ENCODE measurements at regions of chr20 and their contacts with region 1.

Region 1: DNA sequence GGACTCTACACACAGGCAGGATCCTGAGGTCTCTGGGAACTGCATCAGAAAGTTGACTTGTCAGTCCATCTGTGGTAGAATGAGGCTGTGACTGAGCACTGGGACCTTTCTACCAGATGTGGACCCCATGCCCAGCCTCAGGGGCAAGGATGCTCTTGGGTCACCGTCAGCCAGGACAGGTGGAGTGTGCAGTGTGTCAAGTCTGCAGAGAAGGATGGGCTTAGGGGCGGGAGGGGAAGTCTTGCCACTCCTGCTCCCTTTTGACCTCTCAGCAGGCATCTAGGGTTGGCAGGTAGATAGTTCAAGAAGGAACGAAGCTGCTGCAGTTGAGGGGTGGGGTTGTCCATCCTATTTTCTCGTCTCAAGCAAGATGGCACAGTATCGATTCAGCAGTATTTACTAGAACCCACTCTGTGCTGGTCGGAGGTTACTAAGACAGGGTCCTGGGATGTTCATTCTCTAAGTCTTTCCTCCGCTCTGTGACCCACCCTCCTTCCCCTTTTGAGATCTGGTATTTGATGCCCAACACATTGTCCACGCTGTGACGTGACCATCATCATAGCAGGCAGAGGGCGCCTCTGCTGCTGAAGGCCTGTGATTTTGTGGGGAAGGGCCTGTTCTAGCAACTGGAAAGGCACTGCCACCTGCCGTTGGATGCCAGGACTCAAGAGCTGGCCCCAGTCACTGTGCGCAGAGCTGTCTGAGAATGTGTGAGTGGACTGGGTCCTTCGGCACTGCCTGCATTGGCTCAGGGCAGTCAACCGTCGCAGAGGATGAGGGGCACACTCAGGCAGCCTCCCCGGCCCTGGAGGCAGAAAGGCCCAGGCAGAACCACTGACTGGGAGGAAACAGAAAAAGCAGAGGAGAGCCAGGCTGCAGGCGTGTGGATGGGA is 23.2 kb downstream of the RBCK1 start:
- DNase-seq: peak; percentile 65 to 90 (median 81)
- H3K4me3 ChIP-seq: no peak overlapping the region
- H3K27ac ChIP-seq: peak overlapping the region in 4 of 5 donors; percentile 29 to 82 (median 52)
- H3K4me1 ChIP-seq: peaks cover 0 to 34% of the 10 kb centered on the region in 2 donors
- H3K27me3 ChIP-seq: no peaks in the 10 kb centered on the region
- CTCF ChIP-seq: peak; percentile 28 to 74 (median 66)
- POLR2A ChIP-seq: no peak

Region 2: GRCh38 chr20:362271-363254 is 68.7 kb before region 1 on chr20:
- intact Hi-C with region 1: loop called in 1 of 2 experiments (anchors 5 kb)
- DNase-seq: peak; percentile 90 to 98 (median 97)
- H3K4me3 ChIP-seq: no peak overlapping the region
- H3K27ac ChIP-seq: no peak overlapping the region
- H3K4me1 ChIP-seq: peaks cover 0 to 6% of the 10 kb centered on the region in 2 donors
- H3K27me3 ChIP-seq: no peaks in the 10 kb centered on the region
- CTCF ChIP-seq: peak; percentile 30 to 88 (median 72)
- POLR2A ChIP-seq: no peak

Region 3: GRCh38 chr20:833450-834150 is 402.3 kb after region 1 on chr20 and contains the start of gene FAM110A:
- intact Hi-C with region 1: no loop called
- DNase-seq: peak; percentile 96 to 98 (median 97)
- H3K4me3 ChIP-seq: peak within 1 kb of the TSS in 3 of 4 donors; percentile 11 to 97 (median 72)
- H3K27ac ChIP-seq: peak within 1 kb of the TSS; percentile 52 to 90 (median 80)
- H3K4me1 ChIP-seq: peaks cover 26 to 34% of the 10 kb centered on the region in 2 donors
- H3K27me3 ChIP-seq: no peaks in the 10 kb centered on the region
- CTCF ChIP-seq: no peak
- POLR2A ChIP-seq: peak in 1 of 2 donors; percentile 27
- total RNA-seq, gene FAM110A: 2.2 to 16.7 (median 10.3) TPM

Measured in adrenal gland (tissue), 19 donors.